Endothelial cell of umbilical vein (primary cell): ENCODE measurements at regions of chr11 and their contacts with region 1.

Region 1: GRCh38 chr11:16613512-16614381 is 124.7 kb upstream of the C11orf58 start:
- DNase-seq: peak; percentile 71
- H3K4me3 ChIP-seq: peak overlapping the region in 2 of 3 experiments; percentile 4 to 7
- H3K27ac ChIP-seq: no peak overlapping the region
- H3K4me1 ChIP-seq: peaks cover 13% of the 10 kb centered on the region
- H3K27me3 ChIP-seq: peaks cover 42 to 76% of the 10 kb centered on the region in 2 experiments
- CTCF ChIP-seq: peak; percentile 89 to 90
- POLR2A ChIP-seq: no peak

Region 2: GRCh38 chr11:15101072-15101709 is 1512.6 kb before region 1 on chr11:
- CTCF ChIA-PET with region 1: interaction called, 94 read pairs
- POLR2A ChIA-PET with region 1: no interaction called
- dilution Hi-C with region 1: no loop called
- intact Hi-C with region 1: loop called (anchors 5 kb)
- DNase-seq: peak; percentile 63
- H3K4me3 ChIP-seq: no peak overlapping the region
- H3K27ac ChIP-seq: no peak overlapping the region
- H3K4me1 ChIP-seq: no peaks in the 10 kb centered on the region
- H3K27me3 ChIP-seq: peaks cover 4 to 5% of the 10 kb centered on the region in 2 experiments
- CTCF ChIP-seq: peak; percentile 78 to 90
- POLR2A ChIP-seq: no peak

Region 3: GRCh38 chr11:15770798-15771414 is 842.8 kb before region 1 on chr11:
- CTCF ChIA-PET with region 1: interaction called, 17 read pairs
- POLR2A ChIA-PET with region 1: no interaction called
- dilution Hi-C with region 1: no loop called
- intact Hi-C with region 1: loop called (anchors 1 kb)
- DNase-seq: peak; percentile 16
- H3K4me3 ChIP-seq: no peak overlapping the region
- H3K27ac ChIP-seq: no peak overlapping the region
- H3K4me1 ChIP-seq: no peaks in the 10 kb centered on the region
- H3K27me3 ChIP-seq: no peaks in the 10 kb centered on the region
- CTCF ChIP-seq: peak; percentile 52 to 55
- POLR2A ChIP-seq: no peak

Region 4: GRCh38 chr11:15826826-15827225 is 786.9 kb before region 1 on chr11:
- CTCF ChIA-PET with region 1: interaction called, 96 read pairs
- POLR2A ChIA-PET with region 1: no interaction called
- dilution Hi-C with region 1: no loop called
- intact Hi-C with region 1: loop called (anchors 1 kb)
- DNase-seq: peak; percentile 49
- H3K4me3 ChIP-seq: no peak overlapping the region
- H3K27ac ChIP-seq: no peak overlapping the region
- H3K4me1 ChIP-seq: peaks cover 18% of the 10 kb centered on the region
- H3K27me3 ChIP-seq: no peaks in the 10 kb centered on the region
- CTCF ChIP-seq: peak; percentile 65 to 75
- POLR2A ChIP-seq: no peak

Region 5: DNA sequence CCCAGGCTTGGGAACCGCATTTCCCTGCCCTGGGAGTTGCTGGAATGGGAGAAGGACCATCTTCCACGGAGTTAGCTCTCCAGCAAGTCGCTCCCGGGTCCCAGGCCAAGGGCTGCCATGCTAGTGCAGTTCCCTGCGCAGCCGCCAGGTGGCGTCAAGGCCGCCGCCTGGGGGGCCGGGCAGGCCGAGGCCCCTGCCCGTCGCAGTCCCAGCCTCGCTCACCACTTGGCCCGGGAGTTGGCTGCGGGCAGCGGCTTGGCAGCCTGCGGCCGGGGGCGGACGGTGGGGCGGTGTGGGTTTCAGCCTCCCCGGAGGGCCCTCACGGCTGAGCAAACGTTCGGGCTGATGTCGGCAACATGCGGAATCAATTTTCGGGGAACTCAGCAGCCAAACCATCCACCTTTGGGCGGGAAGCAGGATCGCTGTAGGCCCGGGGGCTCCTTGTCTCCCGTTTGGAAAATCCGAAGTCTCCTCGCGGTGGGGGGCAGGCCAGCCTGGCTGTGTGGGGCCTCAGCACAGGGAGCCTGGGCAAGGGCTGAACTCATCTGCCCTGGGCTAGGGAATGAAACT is 672.5 kb before region 1 on chr11:
- CTCF ChIA-PET with region 1: interaction called, 118 read pairs
- POLR2A ChIA-PET with region 1: no interaction called
- dilution Hi-C with region 1: no loop called
- intact Hi-C with region 1: loop called (anchors 1 kb)
- DNase-seq: peak; percentile 40
- H3K4me3 ChIP-seq: no peak overlapping the region
- H3K27ac ChIP-seq: no peak overlapping the region
- H3K4me1 ChIP-seq: no peaks in the 10 kb centered on the region
- H3K27me3 ChIP-seq: no peaks in the 10 kb centered on the region
- CTCF ChIP-seq: peak; percentile 95 to 97
- POLR2A ChIP-seq: no peak

Region 6: GRCh38 chr11:16528639-16529038 is 85.1 kb before region 1 on chr11:
- CTCF ChIA-PET with region 1: no interaction called
- POLR2A ChIA-PET with region 1: no interaction called
- dilution Hi-C with region 1: no loop called
- intact Hi-C with region 1: no loop called
- DNase-seq: no peak
- H3K4me3 ChIP-seq: no peak overlapping the region
- H3K27ac ChIP-seq: no peak overlapping the region
- H3K4me1 ChIP-seq: no peaks in the 10 kb centered on the region
- H3K27me3 ChIP-seq: no peaks in the 10 kb centered on the region
- CTCF ChIP-seq: no peak
- POLR2A ChIP-seq: no peak

Region 7: DNA sequence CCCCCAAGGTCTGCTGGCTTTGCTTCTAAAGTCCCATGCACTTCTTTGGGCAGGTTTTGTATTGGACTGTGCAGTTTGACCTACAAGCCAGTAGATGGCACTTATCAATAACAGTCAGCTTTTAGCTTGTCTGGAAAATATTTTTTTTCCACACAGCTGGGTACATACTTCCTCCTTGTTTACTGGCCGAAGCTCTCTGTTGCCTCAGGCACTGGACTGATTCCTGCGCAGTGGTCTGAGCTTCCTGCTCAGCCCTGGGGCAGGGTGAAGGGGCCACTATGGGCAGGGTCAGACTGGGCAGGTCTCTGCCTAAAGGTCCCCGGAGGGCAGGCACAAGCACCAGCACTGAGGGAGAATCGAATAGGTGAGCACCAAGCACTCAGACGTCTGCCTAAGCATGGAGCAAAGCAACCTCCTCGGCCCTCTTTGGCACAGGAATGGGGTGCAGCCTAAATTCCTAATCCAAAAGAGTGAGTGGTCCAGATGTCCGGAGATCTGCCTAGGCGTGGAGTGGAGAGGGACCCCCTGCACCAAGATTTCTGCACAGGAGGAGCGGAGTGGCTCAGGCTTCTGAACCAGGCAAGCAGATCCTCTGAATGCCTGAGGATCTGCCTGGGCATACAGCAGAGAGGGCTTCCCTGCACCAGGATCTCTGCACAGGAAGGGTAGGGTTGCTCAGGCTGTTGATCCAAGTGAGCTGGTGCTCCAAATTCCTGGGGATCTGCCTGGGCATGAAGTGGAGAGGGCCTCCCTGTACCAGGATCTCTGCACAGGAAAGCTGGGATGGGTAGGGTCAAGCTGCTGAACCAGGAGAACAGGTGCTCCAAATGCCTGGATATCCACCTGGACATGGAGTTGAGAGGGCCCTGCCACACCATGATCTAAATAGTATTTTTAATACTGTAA is 18.8 kb after region 1 on chr11:
- CTCF ChIA-PET with region 1: interaction called, 21 read pairs
- POLR2A ChIA-PET with region 1: no interaction called
- dilution Hi-C with region 1: no loop called
- intact Hi-C with region 1: no loop called
- DNase-seq: peak; percentile 8
- H3K4me3 ChIP-seq: no peak overlapping the region
- H3K27ac ChIP-seq: no peak overlapping the region
- H3K4me1 ChIP-seq: no peaks in the 10 kb centered on the region
- H3K27me3 ChIP-seq: peaks cover 0 to 2% of the 10 kb centered on the region in 2 experiments
- CTCF ChIP-seq: peak in 1 of 2 donors; percentile 51
- POLR2A ChIP-seq: no peak